ENCODE measurements at regions of chr7 and their contacts with region 1.

Region 1: DNA sequence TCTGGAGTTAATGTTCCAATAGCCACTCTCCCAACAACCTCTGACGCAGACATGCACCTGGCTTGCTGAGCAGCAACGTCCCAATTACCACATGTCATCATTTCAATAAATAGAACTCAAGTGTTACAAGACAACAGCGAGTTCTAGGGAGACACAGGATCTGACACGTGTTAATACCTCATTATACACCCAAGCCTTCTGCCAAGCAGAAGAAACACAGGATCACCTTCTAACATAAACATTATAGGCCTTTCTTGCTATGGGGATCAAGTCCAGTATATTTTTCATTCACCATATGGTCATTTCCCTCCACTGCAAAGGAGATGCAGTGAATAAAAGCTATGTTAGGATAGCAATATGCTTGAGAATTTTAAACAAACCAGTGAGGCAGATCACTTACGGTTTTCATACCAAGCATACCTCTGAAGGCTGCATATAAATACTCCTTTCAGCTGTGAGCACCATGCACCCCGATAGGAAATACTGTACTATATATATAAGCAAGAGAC is 74.2 kb downstream of the JAZF1 start:
- DNase-seq: no peak
- H3K4me3 ChIP-seq: no peak overlapping the region
- H3K27ac ChIP-seq: no peak overlapping the region
- H3K4me1 ChIP-seq: peaks cover 3% of the 10 kb centered on the region
- H3K27me3 ChIP-seq: no peaks in the 10 kb centered on the region
- CTCF ChIP-seq: no peak
- POLR2A ChIP-seq: no peak

Region 2: GRCh38 chr7:27689591-27690164 is 416.7 kb before region 1 on chr7:
- intact Hi-C with region 1: no loop called
- DNase-seq: no peak
- H3K4me3 ChIP-seq: no peak overlapping the region
- H3K27ac ChIP-seq: no peak overlapping the region
- H3K4me1 ChIP-seq: no peaks in the 10 kb centered on the region
- H3K27me3 ChIP-seq: no peaks in the 10 kb centered on the region
- CTCF ChIP-seq: peak in 2 of 4 experiments; percentile 10 to 29
- POLR2A ChIP-seq: no peak

Region 3: GRCh38 chr7:28272461-28272877 is 166.1 kb after region 1 on chr7:
- intact Hi-C with region 1: loop called (anchors 5 kb)
- DNase-seq: no peak
- H3K4me3 ChIP-seq: no peak overlapping the region
- H3K27ac ChIP-seq: no peak overlapping the region
- H3K4me1 ChIP-seq: no peaks in the 10 kb centered on the region
- H3K27me3 ChIP-seq: no peaks in the 10 kb centered on the region
- CTCF ChIP-seq: peak in 3 of 4 experiments; percentile 19 to 39 (median 32)
- POLR2A ChIP-seq: no peak

Measured in prostate gland (tissue), 2 donors.